Uterus (tissue), 4 donors: ENCODE measurements at regions of chr6 and their contacts with region 1.

Region 1: DNA sequence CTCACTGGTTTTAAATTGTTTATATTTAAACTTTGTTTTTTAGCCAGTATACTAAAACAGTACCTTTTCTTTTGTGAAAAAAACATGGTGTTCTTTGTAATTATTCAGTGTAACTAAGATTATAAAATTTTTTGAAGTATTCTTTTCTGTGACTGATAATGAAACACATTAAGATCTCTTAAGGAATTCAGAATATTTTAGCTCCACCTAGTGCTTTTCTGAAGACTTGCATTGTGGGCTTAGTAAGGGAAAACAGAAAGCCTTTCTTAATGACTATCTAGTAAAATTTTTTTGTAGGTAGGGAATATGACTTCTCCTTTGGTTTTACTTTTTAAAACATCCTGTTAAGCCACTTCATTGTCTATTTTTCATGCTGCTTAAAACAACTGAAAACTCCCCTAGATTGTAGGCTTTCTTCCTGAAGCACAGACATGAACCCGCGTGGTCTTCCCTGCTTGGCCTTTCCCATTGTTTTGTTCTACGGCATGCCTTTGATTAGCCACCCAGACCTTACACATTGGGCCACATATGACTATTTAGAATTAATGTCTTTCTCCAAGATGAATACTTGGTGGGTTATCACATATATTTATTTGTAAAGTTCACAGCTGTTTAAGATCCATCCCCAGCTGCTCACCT is 72.1 kb downstream of the AFDN start:
- DNase-seq: no peak
- H3K4me3 ChIP-seq: no peak overlapping the region
- H3K27ac ChIP-seq: no peak overlapping the region
- H3K4me1 ChIP-seq: no peaks in the 10 kb centered on the region
- H3K27me3 ChIP-seq: no peaks in the 10 kb centered on the region
- CTCF ChIP-seq: peak; percentile 68 to 80 (median 74)
- POLR2A ChIP-seq: no peak

Region 2: DNA sequence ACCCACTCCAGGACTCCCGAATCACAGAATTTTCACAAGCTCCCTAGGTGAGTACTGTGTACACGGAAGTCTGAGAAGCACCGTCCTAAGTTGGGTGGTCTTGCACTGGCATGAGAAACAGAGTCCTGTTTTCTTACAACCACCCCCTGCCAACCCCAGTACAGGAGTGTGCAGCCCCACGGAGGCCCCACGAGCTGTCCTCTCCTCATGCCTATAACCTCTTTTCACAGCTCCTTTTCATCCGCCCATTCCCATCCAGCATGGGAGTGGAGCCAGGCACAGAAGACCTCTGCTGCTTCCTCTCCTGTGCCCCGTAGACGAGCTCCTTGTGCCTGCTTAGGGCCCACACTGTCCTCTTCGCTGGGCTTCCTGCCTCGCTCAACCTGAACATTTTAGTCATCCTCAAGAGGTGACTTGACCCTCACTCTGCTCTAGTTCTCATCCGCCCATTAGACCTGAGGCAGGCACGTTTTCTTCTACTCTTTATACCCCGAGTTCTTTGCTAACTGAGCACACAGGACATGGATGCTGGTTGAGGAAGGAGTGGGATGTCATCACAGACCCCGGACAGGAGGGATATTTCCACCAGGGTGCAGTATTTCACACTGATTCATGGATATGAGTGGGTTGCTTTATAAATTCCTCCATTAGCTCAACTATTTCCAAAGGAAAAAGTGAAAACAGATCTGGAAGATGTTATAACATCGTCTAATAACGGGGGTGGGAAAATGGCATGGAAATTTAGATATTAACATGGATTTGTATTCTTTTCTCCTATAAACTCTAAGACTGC is 413.4 kb before region 1 on chr6:
- intact Hi-C with region 1: loop called (anchors 5 kb)
- DNase-seq: peak; percentile 33 to 42
- H3K4me3 ChIP-seq: no peak overlapping the region
- H3K27ac ChIP-seq: no peak overlapping the region
- H3K4me1 ChIP-seq: no peaks in the 10 kb centered on the region
- H3K27me3 ChIP-seq: no peaks in the 10 kb centered on the region
- CTCF ChIP-seq: peak; percentile 47 to 64 (median 58)
- POLR2A ChIP-seq: no peak

Region 3: GRCh38 chr6:167550941-167551627 is 347.7 kb before region 1 on chr6:
- intact Hi-C with region 1: no loop called
- DNase-seq: peak; percentile 87 to 93
- H3K4me3 ChIP-seq: no peak overlapping the region
- H3K27ac ChIP-seq: peak overlapping the region; percentile 73 to 83
- H3K4me1 ChIP-seq: peaks cover 0 to 8% of the 10 kb centered on the region in 2 donors
- H3K27me3 ChIP-seq: no peaks in the 10 kb centered on the region
- CTCF ChIP-seq: no peak
- POLR2A ChIP-seq: no peak

Region 4: GRCh38 chr6:167791001-167791779 is 107.6 kb before region 1 on chr6:
- intact Hi-C with region 1: no loop called
- DNase-seq: no peak
- H3K4me3 ChIP-seq: no peak overlapping the region
- H3K27ac ChIP-seq: no peak overlapping the region
- H3K4me1 ChIP-seq: no peaks in the 10 kb centered on the region
- H3K27me3 ChIP-seq: no peaks in the 10 kb centered on the region
- CTCF ChIP-seq: no peak
- POLR2A ChIP-seq: no peak

Region 5: GRCh38 chr6:167855825-167856425 is 42.9 kb before region 1 on chr6:
- intact Hi-C with region 1: no loop called
- DNase-seq: no peak
- H3K4me3 ChIP-seq: no peak overlapping the region
- H3K27ac ChIP-seq: no peak overlapping the region
- H3K4me1 ChIP-seq: peaks cover 0 to 4% of the 10 kb centered on the region in 2 donors
- H3K27me3 ChIP-seq: no peaks in the 10 kb centered on the region
- CTCF ChIP-seq: no peak
- POLR2A ChIP-seq: no peak